Activated CD4-positive, alpha-beta memory T cell treated with anti-CD3 and anti-CD28 coated beads, Interleukin-2, amount 10 ng/mL, durations not matched to agents 7 days and 5 days (primary cell): ENCODE measurements at regions of chr18 and their contacts with region 1.

Region 1: DNA sequence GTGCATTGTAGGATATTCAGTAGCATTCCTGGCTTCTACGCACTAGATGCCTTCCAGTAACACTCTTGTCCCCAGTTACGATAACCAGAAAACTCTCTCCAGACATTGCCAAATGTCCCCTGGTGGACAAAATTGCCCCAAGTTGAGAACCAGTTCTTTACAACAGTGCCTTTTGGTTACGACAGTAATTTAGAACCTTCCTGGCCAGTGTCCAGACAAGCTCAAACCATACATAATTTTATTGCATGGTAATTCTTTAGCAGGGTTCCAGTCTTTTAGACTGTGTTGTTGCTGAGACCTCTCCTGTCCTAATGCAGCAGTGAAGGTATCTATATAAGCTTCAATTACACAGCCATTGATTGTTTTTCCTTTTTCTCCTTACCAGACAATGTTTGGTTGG is 20.2 kb downstream of the RNMT start:
- DNase-seq: no peak
- H3K4me3 Mint-ChIP-seq: no peak overlapping the region
- H3K27ac Mint-ChIP-seq: no peak overlapping the region
- H3K4me1 Mint-ChIP-seq: peaks cover 12% of the 10 kb centered on the region
- H3K27me3 Mint-ChIP-seq: no peaks in the 10 kb centered on the region

Region 2: GRCh38 chr18:13726232-13726971 is 20.2 kb before region 1 on chr18 and contains the starts of genes FAM210A and RNMT:
- CTCF ChIA-PET with region 1: interaction called, 3 read pairs
- POLR2A ChIA-PET with region 1: interaction called, 16 read pairs
- DNase-seq: peak; percentile 95
- H3K4me3 Mint-ChIP-seq: peak within 1 kb of the TSS; percentile 72
- H3K27ac Mint-ChIP-seq: peak within 1 kb of the TSS; percentile 88
- H3K4me1 Mint-ChIP-seq: peaks cover 61% of the 10 kb centered on the region
- H3K27me3 Mint-ChIP-seq: no peaks in the 10 kb centered on the region
- total RNA-seq, gene FAM210A: 22.2 to 22.4 TPM
- total RNA-seq, gene RNMT: 43.7 to 45.3 TPM